T-cell (primary cell): ENCODE measurements at regions of chr11 and their contacts with region 1.

Region 1: GRCh38 chr11:113555071-113555619 is 79.9 kb upstream of the DRD2 start:
- DNase-seq: no peak
- ATAC-seq: no peak
- H3K4me3 ChIP-seq: no peak overlapping the region
- H3K4me3 Mint-ChIP-seq: no peak overlapping the region
- H3K27ac ChIP-seq: no peak overlapping the region
- H3K27ac Mint-ChIP-seq: no peak overlapping the region
- H3K4me1 ChIP-seq: no peaks in the 10 kb centered on the region
- H3K4me1 Mint-ChIP-seq: no peaks in the 10 kb centered on the region
- H3K27me3 ChIP-seq: peaks cover 0 to 10% of the 10 kb centered on the region in 2 experiments
- H3K27me3 Mint-ChIP-seq: peaks cover 5 to 22% of the 10 kb centered on the region in 2 donors

Region 2: GRCh38 chr11:112958670-112959069 is 596.5 kb before region 1 on chr11:
- CTCF ChIA-PET with region 1: interaction called in 1 of 2 experiments, 10 read pairs
- POLR2A ChIA-PET with region 1: no interaction called
- DNase-seq: no peak
- ATAC-seq: no peak
- H3K4me3 ChIP-seq: no peak overlapping the region
- H3K4me3 Mint-ChIP-seq: no peak overlapping the region
- H3K27ac ChIP-seq: no peak overlapping the region
- H3K27ac Mint-ChIP-seq: no peak overlapping the region
- H3K4me1 ChIP-seq: peaks cover 0 to 22% of the 10 kb centered on the region in 2 experiments
- H3K4me1 Mint-ChIP-seq: peaks cover 14 to 17% (median 17%) of the 10 kb centered on the region in 3 donors
- H3K27me3 ChIP-seq: peaks cover 16 to 31% of the 10 kb centered on the region in 2 experiments
- H3K27me3 Mint-ChIP-seq: peaks cover 43 to 58% of the 10 kb centered on the region in 2 donors

Region 3: GRCh38 chr11:113392236-113392921 is 162.8 kb before region 1 on chr11:
- CTCF ChIA-PET with region 1: no interaction called
- POLR2A ChIA-PET with region 1: no interaction called
- DNase-seq: no peak
- ATAC-seq: no peak
- H3K4me3 ChIP-seq: no peak overlapping the region
- H3K4me3 Mint-ChIP-seq: no peak overlapping the region
- H3K27ac ChIP-seq: no peak overlapping the region
- H3K27ac Mint-ChIP-seq: no peak overlapping the region
- H3K4me1 ChIP-seq: peaks cover 0 to 9% of the 10 kb centered on the region in 2 experiments
- H3K4me1 Mint-ChIP-seq: no peaks in the 10 kb centered on the region
- H3K27me3 ChIP-seq: peaks cover 0 to 27% of the 10 kb centered on the region in 2 experiments
- H3K27me3 Mint-ChIP-seq: peaks cover under 1 to 3% of the 10 kb centered on the region in 2 donors